HEK293 (cell line): ENCODE measurements at regions of chr19 and their contacts with region 1.

Region 1: GRCh38 chr19:38387550-38388348 is at the start of gene GGN:
- H3K4me3 ChIP-seq: peak within 1 kb of the TSS; percentile 56
- H3K27ac ChIP-seq: peak within 1 kb of the TSS; percentile 63
- H3K4me1 ChIP-seq: peaks cover 19% of the 10 kb centered on the region
- CTCF ChIP-seq: no peak

Region 2: DNA sequence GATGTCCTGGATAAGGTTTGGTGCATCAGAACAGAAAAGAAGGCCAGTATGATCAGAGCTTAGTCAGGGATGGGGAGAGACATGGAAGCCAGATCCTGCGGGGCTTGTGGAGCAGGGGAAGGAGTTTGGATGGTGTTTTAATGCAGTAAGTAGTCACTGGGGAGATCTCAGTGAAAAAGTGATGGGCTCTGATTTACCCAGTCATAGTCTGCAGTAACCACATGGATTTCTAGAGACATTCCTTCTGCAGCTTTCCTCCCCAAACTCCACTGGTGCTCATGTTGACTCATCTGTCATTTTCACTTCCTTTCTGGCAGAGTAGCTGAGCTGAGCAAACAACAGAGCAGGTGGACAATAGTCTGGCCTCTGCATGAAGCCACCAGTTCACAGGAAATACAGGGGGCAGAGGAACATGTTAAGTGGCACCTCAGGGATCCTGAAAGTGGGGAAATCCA is 307.8 kb before region 1 on chr19:
- CTCF ChIA-PET with region 1: no interaction called
- POLR2A ChIA-PET with region 1: no interaction called
- H3K4me3 ChIP-seq: no peak overlapping the region
- H3K27ac ChIP-seq: no peak overlapping the region
- H3K4me1 ChIP-seq: no peaks in the 10 kb centered on the region
- CTCF ChIP-seq: no peak

Region 3: GRCh38 chr19:38229585-38230073 is 158.1 kb before region 1 on chr19:
- CTCF ChIA-PET with region 1: interaction called, 14 read pairs
- POLR2A ChIA-PET with region 1: no interaction called
- H3K4me3 ChIP-seq: peak overlapping the region; percentile 40
- H3K27ac ChIP-seq: no peak overlapping the region
- H3K4me1 ChIP-seq: peaks cover 10% of the 10 kb centered on the region
- CTCF ChIP-seq: peak; percentile 51

Region 4: GRCh38 chr19:38245826-38246498 is 141.8 kb before region 1 on chr19:
- CTCF ChIA-PET with region 1: interaction called, 14 read pairs
- POLR2A ChIA-PET with region 1: interaction called, 4 read pairs
- H3K4me3 ChIP-seq: no peak overlapping the region
- H3K27ac ChIP-seq: no peak overlapping the region
- H3K4me1 ChIP-seq: peaks cover 6% of the 10 kb centered on the region; the same call in 1 of the 2 replicates
- CTCF ChIP-seq: no peak

Region 5: DNA sequence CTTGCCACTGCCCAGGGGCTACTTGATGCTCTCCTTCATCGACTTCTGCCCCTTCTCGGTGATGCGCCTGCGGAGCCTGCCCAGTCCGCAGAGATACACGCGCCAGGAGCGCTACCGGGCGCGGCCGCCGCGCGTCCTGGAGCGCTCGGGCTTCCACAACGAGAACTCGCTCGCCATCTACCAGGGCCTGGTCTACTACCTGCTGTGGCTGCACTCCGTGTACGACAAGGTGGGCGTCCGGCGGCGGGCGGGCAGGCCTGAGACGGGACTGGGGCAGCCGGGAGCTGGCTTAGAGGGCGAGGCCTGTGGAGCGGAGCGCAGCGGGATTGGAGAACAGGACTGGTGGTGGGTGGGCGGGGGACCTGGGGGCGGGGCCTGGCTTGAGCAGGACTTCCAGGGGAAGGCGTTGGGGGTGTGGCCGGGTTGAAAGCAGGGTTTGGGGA is 26.1 kb before region 1 on chr19:
- CTCF ChIA-PET with region 1: no interaction called
- POLR2A ChIA-PET with region 1: interaction called, 16 read pairs
- H3K4me3 ChIP-seq: peak overlapping the region; percentile 55
- H3K27ac ChIP-seq: no peak overlapping the region
- H3K4me1 ChIP-seq: peaks cover 10% of the 10 kb centered on the region
- CTCF ChIP-seq: peak; percentile 86

Region 6: DNA sequence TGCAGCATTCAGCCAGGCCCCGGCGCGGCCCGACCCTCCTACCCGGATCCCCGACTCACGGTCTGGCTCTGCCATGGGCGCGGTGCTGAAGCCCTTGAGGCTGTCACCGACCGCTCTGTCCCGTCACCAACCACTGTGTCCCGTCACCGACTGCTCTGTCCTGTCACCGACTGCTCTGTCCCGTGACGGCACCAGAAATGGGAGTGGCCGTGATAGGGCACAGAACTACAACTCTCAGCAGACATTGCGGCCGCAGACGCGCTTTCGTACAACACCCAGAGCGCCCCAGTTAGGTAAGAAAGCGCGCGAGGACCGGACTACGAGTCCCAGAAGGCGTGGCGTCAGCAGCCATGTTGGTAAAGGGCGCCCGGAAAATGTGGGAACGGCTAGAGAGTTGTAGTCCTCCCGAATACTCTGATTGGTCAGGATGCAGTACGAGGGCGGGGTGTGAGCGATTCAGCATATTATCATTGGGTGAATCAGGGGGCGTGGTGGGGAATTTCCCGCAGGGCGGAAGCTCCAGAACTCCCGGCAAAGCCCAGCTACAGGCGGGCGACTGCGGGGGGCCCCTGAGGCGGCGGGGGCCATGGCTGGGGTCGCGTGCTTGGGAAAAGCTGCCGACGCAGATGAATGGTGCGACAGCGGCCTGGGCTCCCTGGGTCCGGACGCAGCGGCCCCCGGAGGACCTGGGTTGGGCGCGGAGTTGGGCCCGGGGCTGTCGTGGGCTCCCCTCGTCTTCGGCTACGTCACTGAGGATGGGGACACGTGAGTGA is 511.9 kb after region 1 on chr19 and contains the starts of genes NFKBIB and SIRT2:
- CTCF ChIA-PET with region 1: no interaction called
- POLR2A ChIA-PET with region 1: interaction called, 10 read pairs
- H3K4me3 ChIP-seq: peak within 1 kb of the TSS; percentile 58
- H3K27ac ChIP-seq: peak within 1 kb of the TSS; percentile 85
- H3K4me1 ChIP-seq: peaks cover 21% of the 10 kb centered on the region
- CTCF ChIP-seq: peak; percentile 59; the same call in 1 of the 2 replicates